GM18951 (cell line): ENCODE measurements at regions of chr6 and their contacts with region 1.

Region 1: GRCh38 chr6:149431905-149432775 is 32.1 kb downstream of the SUMO4 start:
- POLR2A ChIP-seq: no peak

Region 2: GRCh38 chr6:149028767-149029405 is 403.3 kb before region 1 on chr6:
- in situ Hi-C with region 1: loop called (anchors 5 kb)
- POLR2A ChIP-seq: no peak

Region 3: DNA sequence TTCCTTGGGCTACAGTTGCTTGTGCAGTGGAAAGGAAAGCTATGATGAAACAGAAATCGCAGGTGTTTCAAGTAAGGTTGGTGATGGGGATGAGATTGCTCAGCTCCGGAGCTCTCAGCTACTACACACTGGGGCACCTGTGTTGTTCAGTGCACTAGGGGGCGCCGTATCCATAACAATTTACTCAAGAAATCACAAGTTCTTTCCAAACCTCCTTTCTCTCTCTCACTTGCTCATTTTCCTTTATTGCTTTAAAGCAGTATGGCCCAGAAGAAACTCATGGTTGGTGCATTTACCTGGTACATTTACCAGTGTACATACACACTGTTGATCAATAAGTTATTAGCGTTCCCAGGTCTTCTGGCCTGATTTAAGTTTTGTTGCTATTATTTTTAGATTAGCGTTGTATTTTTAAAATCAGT is 349.8 kb before region 1 on chr6:
- in situ Hi-C with region 1: loop called (anchors 5 kb)
- POLR2A ChIP-seq: no peak

Region 4: GRCh38 chr6:149182262-149182661 is 249.9 kb before region 1 on chr6:
- in situ Hi-C with region 1: loop called (anchors 10 kb)
- POLR2A ChIP-seq: no peak

Region 5: GRCh38 chr6:149513915-149514314 is 81.8 kb after region 1 on chr6:
- in situ Hi-C with region 1: loop called (anchors 10 kb)
- POLR2A ChIP-seq: no peak